HEK293T (cell line): ENCODE measurements at regions of chr19 and their contacts with region 1.

Region 1: GRCh38 chr19:49877020-49877878 is at the starts of genes AKT1S1 and TBC1D17:
- DNase-seq: peak; percentile 90

Region 2: DNA sequence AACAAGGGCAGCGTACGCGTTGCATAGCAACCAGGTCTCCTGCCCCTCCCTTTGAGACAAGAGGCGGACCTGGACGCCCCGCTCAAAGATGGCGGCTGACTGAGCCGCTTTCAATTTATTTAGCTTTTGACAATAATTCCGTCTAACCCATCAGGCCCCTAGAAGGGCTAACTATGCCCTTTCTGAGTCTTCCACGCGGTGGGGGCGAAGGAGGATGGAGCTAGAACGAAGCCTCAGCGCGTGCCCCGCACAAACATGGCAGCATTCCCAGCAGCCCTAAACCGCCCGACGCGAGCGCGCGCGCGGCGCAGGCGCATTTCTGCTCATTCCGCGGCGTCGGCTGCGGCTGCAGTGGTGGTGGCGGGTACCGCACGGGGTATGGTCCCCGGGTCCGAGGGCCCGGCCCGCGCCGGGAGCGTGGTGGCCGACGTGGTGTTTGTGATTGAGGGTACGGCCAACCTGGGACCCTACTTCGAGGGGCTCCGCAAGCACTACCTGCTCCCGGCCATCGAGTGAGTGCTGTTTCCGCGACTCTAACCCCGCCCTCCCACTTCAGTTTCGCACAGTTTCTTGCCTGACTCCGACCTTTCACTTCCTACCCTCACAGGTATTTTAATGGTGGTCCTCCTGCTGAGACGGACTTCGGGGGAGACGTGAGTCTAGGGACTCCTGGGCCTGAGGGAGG is 59.1 kb before region 1 on chr19 and contains the start of gene MED25:
- CTCF ChIA-PET with region 1: no interaction called
- POLR2A ChIA-PET with region 1: interaction called, 14 read pairs
- DNase-seq: peak; percentile 90

Region 3: DNA sequence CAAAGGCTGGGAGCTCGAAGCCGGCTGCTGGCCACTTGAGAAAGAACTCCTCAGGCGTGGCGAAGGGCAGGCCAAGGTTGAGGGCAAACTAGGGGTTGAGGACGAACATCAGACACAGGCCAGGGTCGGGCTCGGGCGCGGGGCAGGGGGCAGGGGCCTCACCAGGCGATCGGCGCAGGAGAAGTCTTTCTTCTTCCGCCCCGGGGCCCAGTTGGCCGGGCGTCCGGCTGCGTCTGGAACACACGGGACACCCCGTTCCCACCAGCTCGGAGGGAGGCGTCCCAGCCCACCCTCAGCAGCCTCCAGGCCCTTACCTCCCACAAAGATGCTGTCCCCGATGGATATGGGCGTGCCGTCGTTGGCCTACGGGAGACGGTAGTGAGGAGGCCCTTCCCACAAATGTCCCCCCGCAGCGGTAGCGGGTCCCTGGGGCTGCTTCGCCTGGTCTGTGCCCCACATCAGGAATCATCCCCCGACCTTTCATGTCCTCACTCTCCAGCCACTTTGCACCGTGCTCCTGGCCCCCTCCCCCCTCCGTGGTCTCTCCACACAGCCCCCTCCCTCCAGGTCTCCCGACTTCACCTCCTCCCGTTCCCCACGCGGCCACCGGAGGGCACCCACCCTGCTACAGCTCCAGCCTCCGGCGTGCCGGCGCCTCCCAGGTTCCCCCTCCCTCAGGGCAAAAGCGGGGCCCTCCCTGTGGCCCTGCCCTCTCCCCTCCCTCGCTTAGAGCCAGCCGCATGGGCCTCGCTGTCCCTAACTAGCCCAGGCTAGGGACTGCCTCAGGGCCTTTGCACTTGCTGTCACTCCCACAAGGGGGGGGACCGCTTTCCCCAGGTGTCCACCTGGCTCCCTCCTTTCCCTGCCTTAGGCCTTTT is 14.6 kb before region 1 on chr19:
- CTCF ChIA-PET with region 1: no interaction called
- POLR2A ChIA-PET with region 1: interaction called, 26 read pairs
- DNase-seq: peak; percentile 43

Region 4: DNA sequence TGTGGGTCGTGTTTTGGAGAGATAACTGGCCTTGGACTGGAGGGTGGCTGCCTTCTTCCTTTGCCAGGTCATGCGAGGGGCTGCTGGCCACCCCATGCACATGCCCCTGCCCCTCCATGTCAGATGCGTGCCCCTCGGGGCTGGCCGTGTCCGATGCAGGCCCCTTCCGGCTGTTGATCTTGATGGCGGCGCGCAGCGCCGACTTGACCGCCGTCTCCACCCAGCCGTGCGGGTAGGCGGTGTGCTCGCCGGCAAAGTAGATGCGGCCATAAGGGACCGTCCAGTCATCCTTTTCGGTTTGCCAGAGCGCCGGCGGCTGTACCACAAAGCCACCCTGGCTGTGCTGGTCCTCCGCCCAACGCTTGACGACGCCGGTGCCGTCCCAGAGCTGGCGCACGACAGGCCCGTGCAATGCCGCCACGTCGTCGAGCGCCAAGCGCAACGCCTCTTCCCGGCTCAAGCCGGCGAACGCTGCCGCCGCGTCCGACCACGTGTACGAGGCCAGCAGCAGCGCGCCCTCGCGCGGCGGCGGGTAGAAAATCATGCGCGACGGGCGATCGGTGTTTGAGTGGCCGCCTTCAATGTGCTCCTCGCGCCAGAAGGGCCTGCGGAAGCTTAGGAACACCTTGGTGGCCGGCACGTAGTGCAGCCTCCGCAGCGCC is 12.6 kb after region 1 on chr19:
- CTCF ChIA-PET with region 1: no interaction called
- POLR2A ChIA-PET with region 1: interaction called, 11 read pairs
- DNase-seq: peak; percentile 85

Region 5: DNA sequence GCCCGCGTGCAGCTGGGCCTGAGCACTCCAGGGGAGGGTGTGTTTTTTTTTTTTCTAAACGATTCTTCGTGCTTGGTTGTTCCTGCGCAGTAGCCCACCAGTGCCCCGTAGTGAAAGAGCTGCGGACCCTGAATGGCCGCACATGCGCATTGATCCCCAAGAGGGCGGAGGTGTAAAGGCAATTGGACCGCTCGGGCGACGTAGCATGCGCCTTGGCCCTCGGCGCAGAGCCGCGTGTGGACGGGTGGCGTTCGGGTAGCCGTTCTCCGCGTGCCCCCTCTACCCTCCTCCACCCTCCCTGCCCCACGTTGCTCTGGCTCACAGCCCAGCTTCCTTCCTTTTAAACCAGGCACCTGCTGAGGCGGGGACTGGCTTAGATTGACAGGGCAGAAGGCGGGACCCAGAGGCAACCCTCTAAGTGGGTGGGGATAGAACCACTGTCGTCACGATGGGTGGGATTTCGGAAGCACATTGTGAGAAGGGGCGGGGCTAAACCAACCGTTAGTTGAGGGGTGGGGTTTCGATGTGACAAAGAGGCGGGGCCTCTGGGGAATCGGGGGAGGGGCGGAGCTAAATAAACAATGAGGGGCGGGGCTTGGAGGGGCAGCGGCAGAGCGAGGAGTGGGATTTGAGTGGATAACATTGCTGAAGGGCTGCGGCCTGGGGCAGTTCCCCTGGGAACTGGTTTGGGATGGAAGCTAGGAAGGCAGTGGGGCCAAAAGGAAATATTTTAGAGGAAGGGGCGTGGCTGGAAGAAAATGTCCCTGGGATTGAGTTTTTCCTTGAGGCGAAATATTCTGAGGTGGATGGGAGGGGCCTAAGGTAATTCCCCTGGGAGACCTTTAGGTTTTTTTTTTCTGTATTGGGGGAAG is 52.6 kb after region 1 on chr19:
- CTCF ChIA-PET with region 1: no interaction called
- POLR2A ChIA-PET with region 1: interaction called, 16 read pairs
- DNase-seq: peak; percentile 97